ENCODE measurements at regions of chr6 and their contacts with region 1.

Region 1: GRCh38 chr6:10505529-10505928 is 15.6 kb upstream of the GCNT2 start:
- DNase-seq: no peak
- ATAC-seq: no peak
- H3K4me3 ChIP-seq: no peak overlapping the region
- H3K27ac ChIP-seq: no peak overlapping the region
- H3K4me1 ChIP-seq: peaks cover 0 to 6% (median 0%) of the 10 kb centered on the region in 9 donors
- H3K27me3 ChIP-seq: peaks cover 0 to 7% (median 0%) of the 10 kb centered on the region in 7 donors
- CTCF ChIP-seq: no peak

Region 2: GRCh38 chr6:10793695-10794094 is 288.2 kb after region 1 on chr6:
- intact Hi-C with region 1: loop called in 1 of 10 experiments (anchors 10 kb)
- DNase-seq: no peak
- ATAC-seq: no peak
- H3K4me3 ChIP-seq: no peak overlapping the region
- H3K27ac ChIP-seq: no peak overlapping the region
- H3K4me1 ChIP-seq: no peaks in the 10 kb centered on the region
- H3K27me3 ChIP-seq: no peaks in the 10 kb centered on the region
- CTCF ChIP-seq: no peak

Region 3: DNA sequence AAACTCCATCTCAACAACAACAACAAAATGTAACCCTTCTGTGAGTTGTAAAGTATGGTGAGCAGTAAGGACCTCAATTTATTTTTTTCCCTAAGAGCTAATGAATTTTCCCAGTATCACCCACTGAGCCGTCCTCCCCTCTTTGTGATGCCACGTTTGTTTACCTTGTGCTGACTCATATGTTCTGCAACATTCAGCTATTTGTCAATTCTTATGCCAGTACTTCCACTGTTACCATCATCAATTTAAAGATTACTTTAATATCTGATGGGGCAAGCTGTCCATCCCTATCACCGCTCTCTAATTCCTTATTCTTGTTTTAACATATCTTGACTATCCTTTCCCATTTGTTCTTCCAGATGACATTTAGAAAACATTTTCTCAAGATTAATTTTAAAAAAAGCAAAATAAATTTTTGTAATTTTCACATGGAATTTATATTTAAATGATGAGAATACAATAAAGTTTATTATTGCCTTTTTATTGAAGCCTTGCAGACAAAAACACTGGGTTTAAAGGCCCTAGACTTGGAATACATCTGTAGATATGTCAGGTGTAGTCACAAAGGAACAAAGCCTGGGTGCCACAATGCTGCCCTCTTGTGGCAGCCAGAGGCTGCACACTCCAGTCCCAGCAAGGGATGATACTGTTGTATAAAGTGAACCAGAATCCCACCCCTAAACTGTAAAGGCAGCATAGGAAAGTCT is 295.5 kb after region 1 on chr6:
- intact Hi-C with region 1: loop called in 2 of 10 experiments (anchors 10 kb)
- DNase-seq: peak; percentile 27 to 51
- ATAC-seq: peak; percentile 67 to 88 (median 80)
- H3K4me3 ChIP-seq: no peak overlapping the region
- H3K27ac ChIP-seq: no peak overlapping the region
- H3K4me1 ChIP-seq: no peaks in the 10 kb centered on the region
- H3K27me3 ChIP-seq: no peaks in the 10 kb centered on the region
- CTCF ChIP-seq: peak; percentile 92 to 100 (median 98)

Measured in heart right ventricle (tissue), 16 donors.